ENCODE measurements at regions of chr10 and their contacts with region 1.

Region 1: DNA sequence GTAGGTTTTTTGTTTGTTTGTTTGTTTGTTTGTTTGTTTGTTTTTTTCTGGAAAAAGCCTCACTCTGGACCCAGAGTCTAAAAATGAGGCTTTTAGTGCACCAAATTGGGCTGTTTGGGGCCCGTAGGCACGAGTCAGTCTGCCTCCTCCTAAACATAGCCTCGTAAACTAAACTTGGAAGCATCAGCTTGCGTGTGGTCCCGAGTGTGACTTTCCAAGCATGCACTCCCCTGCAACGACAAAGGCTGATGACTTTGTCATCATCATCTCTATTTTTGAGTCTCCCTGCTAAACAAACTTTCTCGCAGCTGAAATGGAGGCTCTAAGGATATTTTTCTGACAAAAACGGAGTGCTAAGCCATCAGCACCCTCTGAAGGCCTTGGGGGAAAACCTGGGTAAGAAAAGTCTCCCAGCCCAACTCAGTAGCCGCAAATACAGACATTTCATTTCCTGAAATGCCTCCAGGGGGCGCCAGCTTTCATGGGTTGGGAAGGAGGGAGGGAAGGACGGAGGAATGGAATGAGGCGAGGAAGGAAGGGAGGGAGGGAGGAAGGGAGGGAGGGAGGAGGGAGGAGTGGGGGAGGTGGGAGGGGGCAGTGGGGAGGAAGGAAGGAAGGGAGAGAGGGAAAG is 245.9 kb downstream of the KCNMA1 start:
- DNase-seq: peak; percentile 57 to 94
- H3K4me3 ChIP-seq: no peak overlapping the region
- CTCF ChIP-seq: no peak
- POLR2A ChIP-seq: no peak

Region 2: DNA sequence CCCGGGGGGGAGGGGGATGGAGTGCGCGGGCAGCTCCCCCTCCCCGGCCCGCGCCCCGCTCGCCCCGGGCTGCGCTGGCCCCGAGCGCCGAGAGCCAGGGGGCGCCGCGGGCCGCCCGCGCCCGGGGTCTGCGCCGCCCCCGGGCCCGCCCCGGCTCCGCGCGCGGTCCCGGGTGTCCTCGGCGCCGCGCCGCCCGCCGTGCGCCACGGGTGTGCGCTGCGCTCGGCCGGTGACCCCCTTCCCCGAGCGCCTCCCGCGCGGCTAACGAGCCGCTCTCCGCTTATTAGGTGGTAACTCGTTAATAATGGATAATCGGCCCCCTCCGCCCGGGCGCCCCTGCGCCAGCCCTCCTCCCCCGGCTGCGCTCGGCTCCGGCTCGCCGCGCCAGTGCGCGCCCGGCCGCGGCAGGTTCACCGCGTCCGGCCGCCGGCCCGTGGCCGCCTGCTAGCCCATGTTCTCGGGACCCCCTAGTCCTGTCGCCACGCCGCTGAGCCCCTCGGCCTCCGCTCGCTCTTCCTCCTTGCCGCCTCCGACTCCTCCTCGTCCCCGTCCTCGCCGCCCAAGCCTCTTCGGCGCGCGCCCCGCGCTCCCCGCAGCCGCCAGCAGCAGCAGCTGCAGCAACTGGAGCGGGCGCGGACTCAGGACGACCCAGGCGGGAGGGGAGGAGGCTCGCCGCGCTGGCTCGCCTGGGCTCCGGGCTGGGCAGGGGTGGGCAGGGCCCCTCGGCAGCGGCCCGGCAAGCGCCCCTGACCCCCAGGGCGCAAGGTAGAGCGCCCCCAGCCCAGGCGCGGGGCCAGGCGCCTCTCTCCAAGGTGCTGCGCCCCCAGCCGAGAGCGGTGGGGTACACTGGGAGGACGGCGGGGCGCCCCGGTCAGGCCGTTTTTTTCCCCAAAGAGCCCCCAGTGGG is 246.4 kb after region 1 on chr10:
- intact Hi-C with region 1: loop called (anchors 2 kb)
- DNase-seq: no peak
- H3K4me3 ChIP-seq: peak overlapping the region; percentile 0
- CTCF ChIP-seq: no peak
- POLR2A ChIP-seq: no peak